Heart left ventricle (tissue), 16 donors: ENCODE measurements at regions of chr16 and their contacts with region 1.

Region 1: DNA sequence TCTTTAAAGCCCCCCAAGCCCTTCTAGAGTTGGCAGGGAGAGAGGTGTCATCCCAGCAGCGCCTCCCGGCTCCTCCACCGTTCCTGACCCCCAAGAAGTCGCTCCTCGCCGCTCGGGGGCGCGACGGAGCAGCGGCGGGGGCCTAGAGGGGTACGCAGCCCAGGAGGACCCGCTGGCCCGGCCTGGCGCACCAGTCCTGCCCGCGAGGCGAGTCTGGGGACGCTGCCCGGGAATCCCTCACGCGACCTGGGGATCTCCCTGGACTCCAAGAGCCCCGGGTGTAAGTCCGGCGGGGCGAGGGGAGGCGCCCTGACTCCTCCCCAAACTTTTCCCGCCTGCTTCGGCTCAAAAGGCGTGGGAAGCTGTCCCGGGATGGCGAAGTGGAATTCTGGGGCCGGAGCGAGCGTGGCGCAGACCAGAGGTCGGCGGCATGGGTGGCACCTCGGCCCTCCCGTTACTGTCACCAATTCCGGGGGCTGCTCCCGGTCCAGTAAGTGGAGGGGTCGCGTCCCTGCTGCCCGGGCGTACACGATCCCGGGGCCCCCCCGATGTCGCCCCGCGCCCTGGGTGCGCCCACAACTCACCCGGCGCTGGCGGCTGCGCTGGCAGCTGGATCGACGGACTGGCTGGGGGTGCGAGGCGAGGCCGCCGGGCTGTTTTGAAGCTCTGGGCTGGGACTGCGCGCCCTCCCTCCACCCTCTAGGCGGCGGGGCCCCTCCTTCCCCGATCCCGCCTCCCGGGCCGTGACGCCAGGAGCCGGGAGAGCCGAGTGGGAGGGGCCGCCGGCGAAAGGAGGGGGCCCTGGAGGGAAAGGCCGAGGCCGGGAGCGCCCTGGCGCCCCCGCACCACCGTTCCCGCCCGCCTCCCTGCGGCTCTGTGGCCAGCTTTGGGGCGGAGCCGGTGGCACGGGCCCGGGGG is at the start of gene EMP2:
- DNase-seq: peak; percentile 90 to 92 (median 90)
- ATAC-seq: peak; percentile 59 to 89 (median 86)
- H3K4me3 ChIP-seq: peak within 1 kb of the TSS; percentile 69 to 100 (median 93)
- H3K27ac ChIP-seq: peak within 1 kb of the TSS; percentile 85 to 99 (median 96)
- H3K4me1 ChIP-seq: peaks cover 6 to 56% (median 45%) of the 10 kb centered on the region in 12 donors
- H3K27me3 ChIP-seq: peaks cover 0 to 21% (median 0%) of the 10 kb centered on the region in 9 donors
- CTCF ChIP-seq: peak; percentile 37 to 78 (median 60)
- POLR2A ChIP-seq: peak; percentile 48 to 96
- total RNA-seq, gene EMP2: 37.8 to 103 (median 64.8) TPM

Region 2: DNA sequence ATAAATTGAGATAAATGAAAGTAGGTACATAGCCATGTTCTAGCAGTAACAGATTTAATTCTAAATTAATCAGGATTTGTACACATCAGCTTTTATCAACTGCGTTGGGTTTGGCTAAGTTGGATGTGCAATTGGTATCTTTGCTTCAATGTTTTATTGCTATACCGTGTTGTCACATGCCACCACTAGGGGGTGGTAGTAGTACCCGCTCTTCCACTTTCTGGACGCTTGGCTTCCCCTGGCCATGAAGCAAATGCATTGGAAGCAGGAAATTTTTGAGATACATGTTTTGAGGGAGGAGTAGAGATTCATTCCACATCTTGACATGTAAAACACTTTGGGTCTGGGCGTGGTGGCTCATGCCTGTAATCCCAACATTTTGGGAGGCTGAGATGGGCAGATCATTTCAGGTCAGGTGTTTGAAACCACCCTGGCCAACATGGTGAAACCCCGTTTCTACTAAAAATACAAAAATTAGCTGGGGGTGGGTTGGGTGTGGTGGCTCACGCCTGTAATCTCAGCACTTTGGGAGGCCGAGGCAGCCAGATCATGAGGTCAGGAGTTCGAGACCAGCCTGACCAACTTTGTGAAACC is 58.4 kb before region 1 on chr16:
- intact Hi-C with region 1: loop called in 6 of 10 experiments (anchors 5 to 10 kb)
- DNase-seq: peak in 4 of 5 donors; percentile 48 to 60 (median 55)
- ATAC-seq: peak; percentile 57 to 87 (median 70)
- H3K4me3 ChIP-seq: no peak overlapping the region
- H3K27ac ChIP-seq: no peak overlapping the region
- H3K4me1 ChIP-seq: no peaks in the 10 kb centered on the region
- H3K27me3 ChIP-seq: no peaks in the 10 kb centered on the region
- CTCF ChIP-seq: peak; percentile 64 to 93 (median 80)
- POLR2A ChIP-seq: no peak

Region 3: GRCh38 chr16:10558746-10559641 is 21.2 kb before region 1 on chr16:
- intact Hi-C with region 1: loop called in 4 of 10 experiments (anchors 2 kb)
- DNase-seq: peak; percentile 73 to 87 (median 84)
- ATAC-seq: peak; percentile 69 to 88 (median 82)
- H3K4me3 ChIP-seq: peak overlapping the region in 10 of 12 donors; percentile 11 to 48 (median 26)
- H3K27ac ChIP-seq: peak overlapping the region; percentile 86 to 96 (median 90)
- H3K4me1 ChIP-seq: peaks cover 18 to 97% (median 69%) of the 10 kb centered on the region in 12 donors
- H3K27me3 ChIP-seq: no peaks in the 10 kb centered on the region
- CTCF ChIP-seq: no peak
- POLR2A ChIP-seq: no peak

Region 4: GRCh38 chr16:10641953-10642949 is 62.0 kb after region 1 on chr16:
- intact Hi-C with region 1: no loop called
- DNase-seq: no peak
- ATAC-seq: no peak
- H3K4me3 ChIP-seq: no peak overlapping the region
- H3K27ac ChIP-seq: no peak overlapping the region
- H3K4me1 ChIP-seq: no peaks in the 10 kb centered on the region
- H3K27me3 ChIP-seq: no peaks in the 10 kb centered on the region
- CTCF ChIP-seq: no peak
- POLR2A ChIP-seq: no peak

Region 5: GRCh38 chr16:10737068-10737625 is 156.9 kb after region 1 on chr16:
- intact Hi-C with region 1: loop called in 8 of 10 experiments (anchors 1 to 5 kb)
- DNase-seq: peak in 4 of 5 donors; percentile 44 to 68 (median 63)
- ATAC-seq: peak; percentile 19 to 63 (median 55)
- H3K4me3 ChIP-seq: peak overlapping the region in 6 of 12 donors; percentile 2 to 22 (median 10)
- H3K27ac ChIP-seq: peak overlapping the region in 11 of 12 donors; percentile 68 to 94 (median 85)
- H3K4me1 ChIP-seq: peaks cover 5 to 24% (median 18%) of the 10 kb centered on the region in 12 donors
- H3K27me3 ChIP-seq: no peaks in the 10 kb centered on the region
- CTCF ChIP-seq: peak; percentile 88 to 96 (median 94)
- POLR2A ChIP-seq: no peak

Region 6: GRCh38 chr16:10828851-10829731 is 248.9 kb after region 1 on chr16:
- intact Hi-C with region 1: loop called in 2 of 10 experiments (anchors 5 to 10 kb)
- DNase-seq: peak; percentile 93 to 98 (median 96)
- ATAC-seq: peak; percentile 82 to 92 (median 86)
- H3K4me3 ChIP-seq: peak overlapping the region in 6 of 12 donors; percentile 6 to 16 (median 10)
- H3K27ac ChIP-seq: peak overlapping the region; percentile 91 to 99 (median 94)
- H3K4me1 ChIP-seq: peaks cover 3 to 51% (median 33%) of the 10 kb centered on the region in 12 donors
- H3K27me3 ChIP-seq: no peaks in the 10 kb centered on the region
- CTCF ChIP-seq: no peak
- POLR2A ChIP-seq: no peak

Region 7: GRCh38 chr16:11386791-11387546 is 806.7 kb after region 1 on chr16:
- intact Hi-C with region 1: no loop called
- DNase-seq: peak in 3 of 5 donors; percentile 45 to 71 (median 55)
- ATAC-seq: peak in 3 of 4 donors; percentile 44 to 75 (median 61)
- H3K4me3 ChIP-seq: no peak overlapping the region
- H3K27ac ChIP-seq: no peak overlapping the region
- H3K4me1 ChIP-seq: peaks cover 0 to 7% (median 0%) of the 10 kb centered on the region in 12 donors
- H3K27me3 ChIP-seq: peaks cover 0 to 6% (median 0%) of the 10 kb centered on the region in 9 donors
- CTCF ChIP-seq: peak; percentile 8 to 55 (median 34)
- POLR2A ChIP-seq: no peak